Heart right ventricle (tissue), 16 donors: ENCODE measurements at regions of chr1 and their contacts with region 1.

Region 1: DNA sequence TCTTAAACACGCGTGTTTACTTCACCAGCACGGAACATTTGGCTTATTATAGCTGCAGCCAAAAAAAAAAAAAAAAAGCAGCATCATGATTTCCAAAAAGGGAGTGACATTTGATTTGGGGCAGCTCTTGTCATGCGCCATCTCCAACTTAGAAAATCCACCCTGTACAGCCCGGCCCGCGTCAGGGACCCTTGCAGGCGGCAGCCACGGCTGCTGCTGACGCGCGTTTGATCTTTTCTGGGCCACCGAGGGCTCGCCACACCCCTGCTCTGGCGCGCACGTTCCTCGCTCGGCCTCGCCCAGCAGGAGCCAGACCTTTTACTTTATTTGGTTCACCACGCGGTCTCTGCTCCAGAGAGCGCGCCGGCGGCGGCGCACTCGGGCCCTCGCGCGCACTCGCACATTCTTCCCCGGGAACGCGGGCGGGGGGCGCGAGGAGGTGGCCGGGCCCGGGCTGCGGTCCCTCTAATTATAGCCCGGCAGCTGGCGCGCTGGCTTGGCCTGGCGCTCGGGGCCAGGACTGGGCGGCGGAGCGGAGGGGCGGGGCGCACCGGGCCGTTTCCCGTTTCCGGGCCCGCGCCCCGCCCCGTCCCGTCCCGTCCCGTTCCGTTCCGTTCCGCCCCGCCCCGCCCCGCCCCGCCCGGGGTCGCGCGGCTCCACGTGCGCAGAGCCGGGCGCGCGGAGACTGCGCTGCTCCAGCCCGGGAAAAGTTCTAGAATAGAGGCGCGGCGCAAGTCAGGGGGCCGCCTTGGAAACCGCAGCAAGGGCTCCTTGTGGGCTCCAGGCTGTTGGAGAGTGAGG is 10.2 kb downstream of the IRF2BP2 start:
- DNase-seq: peak; percentile 89 to 91
- ATAC-seq: peak; percentile 82 to 97 (median 91)
- H3K4me3 ChIP-seq: peak overlapping the region in 9 of 10 donors; percentile 29 to 95 (median 51)
- H3K27ac ChIP-seq: peak overlapping the region; percentile 91 to 100 (median 99)
- H3K4me1 ChIP-seq: peaks cover 3 to 70% (median 54%) of the 10 kb centered on the region in 9 donors
- H3K27me3 ChIP-seq: no peaks in the 10 kb centered on the region
- CTCF ChIP-seq: peak in 3 of 9 donors; percentile 22 to 36 (median 25)

Region 2: GRCh38 chr1:234509452-234510328 is 90.1 kb before region 1 on chr1:
- intact Hi-C with region 1: loop called in 4 of 10 experiments (anchors 5 to 10 kb)
- DNase-seq: no peak
- ATAC-seq: peak in 1 of 8 donors; percentile 15
- H3K4me3 ChIP-seq: no peak overlapping the region
- H3K27ac ChIP-seq: peak overlapping the region in 1 of 10 donors; percentile 2
- H3K4me1 ChIP-seq: peaks cover 0 to 19% (median 0%) of the 10 kb centered on the region in 9 donors
- H3K27me3 ChIP-seq: no peaks in the 10 kb centered on the region
- CTCF ChIP-seq: no peak

Region 3: DNA sequence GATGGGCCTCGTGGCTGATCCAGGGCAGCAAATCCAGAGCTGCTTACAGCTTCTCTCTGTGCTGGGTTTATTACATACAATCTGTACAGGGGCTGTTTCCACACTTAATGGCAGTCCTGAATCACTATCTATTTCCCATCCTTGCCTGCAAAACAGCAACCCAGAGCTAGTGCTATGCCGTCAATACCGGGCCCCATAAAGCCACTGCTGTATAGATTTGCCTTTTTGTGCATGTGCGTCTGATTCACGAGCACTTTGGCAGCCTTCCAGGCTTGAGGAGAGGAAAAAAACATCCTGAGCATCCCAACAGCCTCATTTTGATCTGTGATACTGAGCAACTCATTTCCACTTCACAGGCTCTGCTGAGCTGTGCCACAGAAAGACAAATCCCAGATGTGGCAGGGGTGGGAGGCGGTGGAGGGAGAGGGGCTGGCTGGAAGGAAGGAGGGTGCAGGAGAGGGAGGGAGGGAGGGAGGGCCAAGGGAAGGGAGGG is 55.7 kb before region 1 on chr1:
- intact Hi-C with region 1: loop called in 4 of 10 experiments (anchors 5 to 10 kb)
- DNase-seq: peak; percentile 49 to 85
- ATAC-seq: peak; percentile 70 to 90 (median 85)
- H3K4me3 ChIP-seq: no peak overlapping the region
- H3K27ac ChIP-seq: peak overlapping the region; percentile 32 to 94 (median 88)
- H3K4me1 ChIP-seq: peaks cover 30 to 82% (median 54%) of the 10 kb centered on the region in 9 donors
- H3K27me3 ChIP-seq: no peaks in the 10 kb centered on the region
- CTCF ChIP-seq: no peak

Region 4: GRCh38 chr1:234881893-234882771 is 282.3 kb after region 1 on chr1:
- intact Hi-C with region 1: loop called in 2 of 10 experiments (anchors 5 to 10 kb)
- DNase-seq: no peak
- ATAC-seq: no peak
- H3K4me3 ChIP-seq: no peak overlapping the region
- H3K27ac ChIP-seq: no peak overlapping the region
- H3K4me1 ChIP-seq: peaks cover 7 to 48% (median 33%) of the 10 kb centered on the region in 9 donors
- H3K27me3 ChIP-seq: no peaks in the 10 kb centered on the region
- CTCF ChIP-seq: no peak

Region 5: GRCh38 chr1:234978397-234979295 is 378.8 kb after region 1 on chr1:
- intact Hi-C with region 1: loop called in 4 of 10 experiments (anchors 5 to 10 kb)
- DNase-seq: no peak
- ATAC-seq: peak in 7 of 8 donors; percentile 28 to 52 (median 39)
- H3K4me3 ChIP-seq: peak overlapping the region in 2 of 10 donors; percentile 9 to 47
- H3K27ac ChIP-seq: peak overlapping the region; percentile 83 to 98 (median 88)
- H3K4me1 ChIP-seq: peaks cover 15 to 93% (median 54%) of the 10 kb centered on the region in 9 donors
- H3K27me3 ChIP-seq: no peaks in the 10 kb centered on the region
- CTCF ChIP-seq: peak in 3 of 9 donors; percentile 27 to 40 (median 28)

Region 6: DNA sequence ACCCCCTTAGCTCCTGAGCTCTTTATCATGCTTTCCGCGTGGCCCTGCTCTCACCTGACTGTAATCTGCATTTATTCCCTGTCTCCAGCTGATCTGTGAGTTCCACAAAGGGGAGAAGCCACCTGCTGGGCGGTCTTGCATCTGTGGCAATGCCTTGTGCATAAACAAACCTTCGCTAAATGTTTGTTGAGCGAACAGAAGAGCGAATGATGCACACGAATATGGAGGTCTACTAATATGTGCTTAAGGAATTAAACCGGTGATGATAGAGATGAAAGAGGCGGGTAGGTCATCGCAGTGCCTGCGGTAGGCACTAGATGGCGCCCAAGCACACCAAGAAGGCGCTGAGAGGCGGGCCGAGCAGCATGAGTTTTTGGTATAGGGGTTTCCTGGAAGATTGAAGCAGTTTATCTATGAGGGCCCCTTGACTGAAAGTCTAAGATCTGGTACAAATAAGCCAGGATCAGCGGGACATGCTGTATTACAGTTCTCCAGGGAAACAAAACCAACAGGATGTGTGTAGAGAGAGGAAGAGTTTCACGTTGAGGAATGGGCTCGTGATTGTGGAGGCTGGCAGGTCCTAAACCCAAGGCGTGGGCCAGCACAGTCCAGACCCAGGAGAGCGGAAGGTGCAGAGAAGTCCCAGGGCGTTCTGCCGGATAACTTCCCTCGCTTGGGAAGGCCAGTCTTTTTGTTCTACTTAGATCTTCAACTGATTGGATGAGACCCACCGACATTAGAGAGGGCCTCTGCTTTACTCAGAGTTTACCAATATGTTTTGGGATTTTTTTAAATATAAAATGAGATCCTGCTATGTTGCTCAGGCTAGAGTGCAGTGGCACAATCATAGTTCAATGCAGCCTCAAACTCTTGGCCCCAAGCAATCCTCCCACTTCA is 494.1 kb after region 1 on chr1:
- intact Hi-C with region 1: loop called in 3 of 10 experiments (anchors 5 to 10 kb)
- DNase-seq: peak; percentile 73 to 80
- ATAC-seq: peak; percentile 62 to 88 (median 80)
- H3K4me3 ChIP-seq: peak overlapping the region in 9 of 10 donors; percentile 11 to 50 (median 33)
- H3K27ac ChIP-seq: peak overlapping the region in 5 of 10 donors; percentile 24 to 67 (median 36)
- H3K4me1 ChIP-seq: peaks cover 3 to 15% (median 12%) of the 10 kb centered on the region in 9 donors
- H3K27me3 ChIP-seq: no peaks in the 10 kb centered on the region
- CTCF ChIP-seq: peak; percentile 86 to 94 (median 89)